MCF 10A (cell line): ENCODE measurements at regions of chr20 and their contacts with region 1.

Region 1: GRCh38 chr20:10536531-10536930 is 101.4 kb downstream of the SLX4IP start:
- DNase-seq: peak; percentile 71
- H3K4me3 Mint-ChIP-seq: no peak overlapping the region
- H3K27ac Mint-ChIP-seq: no peak overlapping the region
- H3K4me1 Mint-ChIP-seq: peaks cover 31% of the 10 kb centered on the region
- H3K27me3 Mint-ChIP-seq: no peaks in the 10 kb centered on the region
- CTCF ChIP-seq: peak; percentile 44

Region 2: DNA sequence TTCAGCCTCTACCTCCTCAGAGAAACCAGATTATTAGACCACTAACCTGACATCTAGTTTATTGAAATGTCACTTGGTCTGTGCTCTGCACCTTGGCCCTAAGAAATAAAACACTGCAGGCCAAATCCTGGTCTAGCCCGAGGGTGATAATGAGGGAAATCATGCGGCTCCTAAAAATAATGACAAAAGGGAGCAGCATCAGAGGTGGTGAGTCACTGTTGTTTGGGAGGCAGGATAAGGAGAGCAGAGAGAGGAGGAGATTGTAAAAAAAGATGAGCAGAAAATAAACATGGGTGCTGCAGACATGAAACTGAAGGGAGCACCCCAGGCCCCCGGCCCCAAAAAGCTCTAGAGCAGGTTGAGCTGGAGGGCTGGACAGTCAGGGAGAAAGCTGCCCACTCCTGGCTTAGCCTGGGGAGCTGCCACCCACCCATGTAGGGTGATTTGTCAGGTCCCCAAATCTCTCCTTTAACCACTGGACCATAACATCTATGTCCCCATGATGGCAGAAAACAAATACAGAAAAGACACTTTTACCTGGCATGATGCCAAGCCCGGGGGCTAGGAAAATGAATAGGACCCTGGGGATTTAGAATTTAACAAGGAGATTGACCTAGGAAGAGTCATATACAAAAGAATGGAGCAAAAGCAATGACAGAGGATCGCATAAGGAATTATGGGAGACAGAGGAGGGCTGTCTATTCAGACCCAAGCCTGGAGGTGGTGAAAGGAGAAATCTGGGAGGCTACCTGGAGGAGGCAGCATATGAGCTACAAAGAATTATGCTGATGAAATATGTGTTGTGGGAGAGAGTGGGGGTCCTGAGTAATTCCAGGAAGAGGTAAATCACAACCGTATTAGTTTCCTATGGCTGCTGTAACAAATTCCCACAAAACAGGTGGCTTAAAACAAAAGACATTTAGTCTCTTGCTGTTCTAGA is 214.2 kb before region 1 on chr20:
- CTCF ChIA-PET with region 1: no interaction called
- POLR2A ChIA-PET with region 1: no interaction called
- intact Hi-C with region 1: no loop called
- DNase-seq: peak; percentile 41
- H3K4me3 Mint-ChIP-seq: no peak overlapping the region
- H3K27ac Mint-ChIP-seq: no peak overlapping the region
- H3K4me1 Mint-ChIP-seq: peaks cover 6% of the 10 kb centered on the region
- H3K27me3 Mint-ChIP-seq: no peaks in the 10 kb centered on the region
- CTCF ChIP-seq: no peak

Region 3: DNA sequence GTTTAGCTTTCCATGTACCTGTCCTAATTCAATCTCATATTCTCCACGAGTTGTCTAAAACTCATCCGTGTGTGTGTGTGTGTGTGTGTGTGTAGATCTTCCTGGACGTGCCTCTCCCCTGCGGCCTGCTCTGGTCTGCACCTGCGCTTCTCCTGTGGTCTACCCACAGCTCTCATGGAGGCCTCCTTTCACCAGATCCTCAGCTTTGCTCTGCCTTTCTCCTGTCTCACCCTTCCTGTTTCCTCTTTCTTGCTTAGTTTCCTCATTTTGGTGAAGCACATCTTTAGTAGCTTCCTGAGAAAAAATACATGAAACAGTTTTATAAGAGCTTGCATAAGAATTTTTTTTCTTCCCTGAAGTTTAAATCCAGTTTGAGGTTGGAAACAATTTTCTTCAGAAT is 83.3 kb before region 1 on chr20:
- CTCF ChIA-PET with region 1: interaction called, 12 read pairs
- POLR2A ChIA-PET with region 1: interaction called, 4 read pairs
- intact Hi-C with region 1: no loop called
- DNase-seq: no peak
- H3K4me3 Mint-ChIP-seq: no peak overlapping the region
- H3K27ac Mint-ChIP-seq: no peak overlapping the region
- H3K4me1 Mint-ChIP-seq: peaks cover 16% of the 10 kb centered on the region
- H3K27me3 Mint-ChIP-seq: no peaks in the 10 kb centered on the region
- CTCF ChIP-seq: no peak

Region 4: GRCh38 chr20:10469599-10469998 is 66.9 kb before region 1 on chr20:
- CTCF ChIA-PET with region 1: interaction called, 48 read pairs
- POLR2A ChIA-PET with region 1: interaction called, 7 read pairs
- intact Hi-C with region 1: loop called (anchors 1 kb)
- DNase-seq: peak; percentile 81
- H3K4me3 Mint-ChIP-seq: no peak overlapping the region
- H3K27ac Mint-ChIP-seq: peak overlapping the region; percentile 59
- H3K4me1 Mint-ChIP-seq: peaks cover 13% of the 10 kb centered on the region
- H3K27me3 Mint-ChIP-seq: no peaks in the 10 kb centered on the region
- CTCF ChIP-seq: peak; percentile 61

Region 5: DNA sequence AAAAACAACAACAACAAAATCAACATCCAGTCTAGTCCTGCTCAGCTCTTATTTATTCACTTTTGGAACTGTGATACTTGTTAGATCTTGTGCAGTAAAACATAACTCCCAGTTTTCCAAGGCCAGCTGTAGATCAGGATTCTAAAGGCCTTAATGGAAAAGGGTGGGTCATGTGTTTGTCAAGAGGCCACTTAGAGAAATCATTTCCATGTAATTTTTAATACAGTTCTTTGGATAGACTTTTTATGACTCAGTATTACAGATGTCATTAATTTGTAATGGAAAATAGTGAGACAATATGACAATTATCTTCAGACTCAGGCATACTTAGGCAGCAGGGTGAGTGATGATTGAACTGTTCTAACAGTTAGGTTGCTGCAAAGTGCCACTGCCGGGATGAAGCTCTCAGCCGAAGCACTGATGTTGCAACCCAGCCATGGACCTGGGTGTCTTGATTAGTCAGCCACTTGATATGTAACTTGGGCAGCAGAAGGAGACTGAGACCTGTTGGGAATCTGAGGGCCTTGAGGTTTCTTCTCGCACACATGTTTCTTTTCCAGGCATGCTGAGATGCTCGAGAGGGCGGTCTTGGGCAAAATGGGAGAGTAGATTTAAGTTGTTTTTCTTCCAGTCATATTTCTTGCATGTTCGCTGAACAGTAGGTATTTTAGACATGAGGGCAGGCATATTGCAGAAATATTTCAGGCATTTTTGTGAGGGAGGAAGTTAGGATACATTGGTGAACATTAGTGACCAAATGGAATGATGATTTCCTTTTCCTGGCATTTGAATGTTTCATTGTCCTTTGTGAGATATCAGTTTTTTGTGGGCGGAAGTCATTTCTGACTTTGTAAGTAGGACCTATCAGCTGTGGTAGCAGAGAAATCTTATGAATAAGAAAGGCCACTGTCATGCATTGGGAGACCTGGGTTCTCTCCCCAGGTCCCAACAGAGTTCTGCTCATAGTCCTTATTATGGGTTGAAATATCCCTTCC is 49.1 kb before region 1 on chr20:
- CTCF ChIA-PET with region 1: interaction called, 10 read pairs
- POLR2A ChIA-PET with region 1: interaction called, 3 read pairs
- intact Hi-C with region 1: no loop called
- DNase-seq: peak; percentile 43
- H3K4me3 Mint-ChIP-seq: no peak overlapping the region
- H3K27ac Mint-ChIP-seq: no peak overlapping the region
- H3K4me1 Mint-ChIP-seq: peaks cover 16% of the 10 kb centered on the region
- H3K27me3 Mint-ChIP-seq: no peaks in the 10 kb centered on the region
- CTCF ChIP-seq: no peak

Region 6: DNA sequence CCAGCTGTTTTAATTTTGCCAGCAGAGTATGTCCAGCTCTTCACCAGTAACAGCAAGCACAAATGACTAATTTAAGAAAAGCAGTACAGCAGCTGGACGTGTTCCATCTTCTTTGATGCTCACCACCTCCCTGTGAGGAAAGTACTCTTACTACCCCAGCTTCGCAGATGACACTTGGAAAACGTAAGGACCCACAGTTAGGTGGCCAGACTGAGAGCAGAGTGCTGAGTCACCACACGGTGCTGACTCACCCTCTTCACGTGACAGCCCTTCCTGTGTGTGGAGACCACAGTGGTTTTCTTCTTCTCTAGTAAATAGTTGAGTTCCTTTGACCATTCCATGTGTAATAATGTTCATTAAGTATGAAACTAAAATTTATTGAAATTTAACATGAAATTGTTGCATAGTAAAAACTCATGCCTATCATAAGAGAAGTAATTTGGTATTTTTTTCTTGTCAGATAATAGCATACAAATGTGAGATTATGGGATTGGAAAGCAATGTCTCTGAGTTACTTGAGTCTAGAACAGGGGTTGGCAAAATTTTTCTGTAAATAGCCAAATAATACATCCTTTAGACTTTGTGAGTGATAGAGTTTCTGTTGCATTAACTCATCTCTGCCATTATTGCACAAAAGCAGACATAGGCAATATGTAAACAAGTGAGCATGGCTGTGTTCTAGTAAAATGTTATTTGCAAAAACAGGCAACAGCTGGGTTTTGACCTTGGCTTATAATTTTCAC is 24.9 kb before region 1 on chr20:
- CTCF ChIA-PET with region 1: interaction called, 36 read pairs
- POLR2A ChIA-PET with region 1: interaction called, 31 read pairs
- intact Hi-C with region 1: no loop called
- DNase-seq: peak; percentile 97
- H3K4me3 Mint-ChIP-seq: peak overlapping the region; percentile 56
- H3K27ac Mint-ChIP-seq: peak overlapping the region; percentile 89
- H3K4me1 Mint-ChIP-seq: peaks cover 45% of the 10 kb centered on the region
- H3K27me3 Mint-ChIP-seq: no peaks in the 10 kb centered on the region
- CTCF ChIP-seq: no peak

Region 7: GRCh38 chr20:10715035-10715434 is 178.5 kb after region 1 on chr20:
- CTCF ChIA-PET with region 1: no interaction called
- POLR2A ChIA-PET with region 1: no interaction called
- intact Hi-C with region 1: no loop called
- DNase-seq: peak; percentile 58
- H3K4me3 Mint-ChIP-seq: no peak overlapping the region
- H3K27ac Mint-ChIP-seq: no peak overlapping the region
- H3K4me1 Mint-ChIP-seq: peaks cover 13% of the 10 kb centered on the region
- H3K27me3 Mint-ChIP-seq: no peaks in the 10 kb centered on the region
- CTCF ChIP-seq: no peak